MCF 10A (cell line): ENCODE measurements at regions of chrX and their contacts with region 1.

Region 1: GRCh38 chrX:151825927-151826481 is 86.7 kb upstream of the MAGEA4 start:
- DNase-seq: peak; percentile 92
- H3K4me3 Mint-ChIP-seq: no peak overlapping the region
- H3K27ac Mint-ChIP-seq: peak overlapping the region; percentile 33
- H3K4me1 Mint-ChIP-seq: peaks cover 21% of the 10 kb centered on the region
- H3K27me3 Mint-ChIP-seq: no peaks in the 10 kb centered on the region
- CTCF ChIP-seq: peak; percentile 32

Region 2: DNA sequence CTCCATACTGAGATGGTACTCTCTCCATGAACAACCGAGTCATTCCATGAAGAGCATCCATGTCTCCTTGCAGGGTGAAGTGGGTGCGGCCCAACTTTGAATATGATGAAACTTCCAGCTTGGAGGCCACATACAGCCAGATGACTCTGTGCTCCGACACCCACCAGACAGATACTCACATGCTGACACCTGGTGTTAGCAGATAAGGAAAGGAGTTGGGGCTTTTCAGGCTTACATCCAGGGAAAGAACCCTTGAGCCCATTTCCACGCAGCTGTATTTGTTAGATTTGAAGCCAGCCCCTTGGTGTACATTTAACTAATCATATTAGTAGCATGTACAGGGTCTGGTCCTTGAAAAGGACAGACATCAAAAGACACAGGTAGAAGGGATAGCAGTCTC is 192.8 kb before region 1 on chrX:
- CTCF ChIA-PET with region 1: no interaction called
- POLR2A ChIA-PET with region 1: no interaction called
- intact Hi-C with region 1: no loop called
- DNase-seq: peak; percentile 5
- H3K4me3 Mint-ChIP-seq: no peak overlapping the region
- H3K27ac Mint-ChIP-seq: no peak overlapping the region
- H3K4me1 Mint-ChIP-seq: no peaks in the 10 kb centered on the region
- H3K27me3 Mint-ChIP-seq: no peaks in the 10 kb centered on the region
- CTCF ChIP-seq: no peak

Region 3: DNA sequence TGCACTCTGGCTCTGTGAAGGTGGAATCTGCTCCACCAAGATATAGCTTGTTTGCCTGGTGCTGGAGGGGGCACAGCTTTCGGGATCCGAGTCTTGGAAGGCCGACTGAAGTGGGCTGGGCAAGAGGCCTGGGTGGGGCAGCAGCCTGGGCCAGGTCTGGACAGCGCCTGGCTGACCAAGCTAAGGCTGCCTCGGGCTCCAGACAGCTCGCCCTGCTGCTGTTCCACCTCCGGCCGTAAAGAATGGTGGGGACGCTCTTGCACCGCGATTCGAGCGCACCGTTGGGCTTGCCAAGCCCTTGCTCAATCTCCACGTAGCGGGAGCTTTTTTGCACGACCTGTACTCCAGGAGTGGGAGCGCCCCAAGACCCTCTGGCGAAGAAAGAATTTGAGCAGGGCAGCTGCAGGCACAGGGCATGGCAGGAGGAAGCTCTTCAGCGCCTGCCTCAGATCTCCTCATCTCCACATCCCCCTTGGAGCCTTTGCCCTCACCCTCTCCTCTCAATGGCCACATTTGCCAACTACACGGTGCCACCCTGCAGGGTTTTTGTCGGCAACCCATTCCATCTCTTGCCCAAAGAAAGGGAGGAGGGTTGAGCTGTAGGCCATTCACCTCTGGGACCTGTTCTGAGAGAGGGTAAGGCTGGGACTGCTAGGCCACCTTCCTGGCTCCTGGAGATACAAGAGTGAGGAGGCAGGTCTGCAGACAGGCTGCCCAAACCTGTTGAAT is 72.5 kb before region 1 on chrX:
- CTCF ChIA-PET with region 1: interaction called, 28 read pairs
- POLR2A ChIA-PET with region 1: interaction called, 7 read pairs
- intact Hi-C with region 1: loop called (anchors 2 kb)
- DNase-seq: peak; percentile 73
- H3K4me3 Mint-ChIP-seq: peak overlapping the region; percentile 36
- H3K27ac Mint-ChIP-seq: peak overlapping the region; percentile 11
- H3K4me1 Mint-ChIP-seq: peaks cover 12% of the 10 kb centered on the region
- H3K27me3 Mint-ChIP-seq: no peaks in the 10 kb centered on the region
- CTCF ChIP-seq: peak; percentile 78

Region 4: DNA sequence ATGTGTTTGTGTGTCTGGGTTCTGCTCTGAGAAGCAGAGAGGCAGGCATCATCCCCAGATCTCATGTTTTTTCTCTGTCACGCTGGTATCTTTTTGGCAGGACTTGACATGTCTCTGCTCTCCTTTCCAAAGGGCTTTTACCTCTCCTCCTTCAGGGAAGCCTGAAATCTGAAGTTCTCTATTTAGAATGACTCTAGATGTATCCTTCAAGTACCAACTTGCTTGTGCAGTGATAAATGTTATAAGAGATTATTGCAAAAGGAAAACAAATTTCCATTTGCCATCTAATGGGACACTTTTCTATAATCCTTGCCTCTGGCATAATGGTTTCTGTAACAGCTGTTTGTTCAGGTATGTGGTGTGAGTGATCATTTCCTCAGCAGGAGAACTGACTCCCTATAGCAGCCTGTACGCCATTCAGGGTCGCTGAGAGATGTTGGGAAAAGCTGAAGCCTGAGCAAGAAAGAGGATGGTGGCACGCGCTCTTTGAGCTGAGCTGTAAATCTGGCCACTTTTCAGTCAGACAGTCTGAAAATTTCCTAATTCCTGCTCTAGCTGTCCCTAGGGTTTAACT is 18.9 kb before region 1 on chrX:
- CTCF ChIA-PET with region 1: interaction called, 10 read pairs
- POLR2A ChIA-PET with region 1: interaction called, 4 read pairs
- intact Hi-C with region 1: no loop called
- DNase-seq: no peak
- H3K4me3 Mint-ChIP-seq: no peak overlapping the region
- H3K27ac Mint-ChIP-seq: peak overlapping the region; percentile 37
- H3K4me1 Mint-ChIP-seq: peaks cover 5% of the 10 kb centered on the region
- H3K27me3 Mint-ChIP-seq: no peaks in the 10 kb centered on the region
- CTCF ChIP-seq: no peak

Region 5: DNA sequence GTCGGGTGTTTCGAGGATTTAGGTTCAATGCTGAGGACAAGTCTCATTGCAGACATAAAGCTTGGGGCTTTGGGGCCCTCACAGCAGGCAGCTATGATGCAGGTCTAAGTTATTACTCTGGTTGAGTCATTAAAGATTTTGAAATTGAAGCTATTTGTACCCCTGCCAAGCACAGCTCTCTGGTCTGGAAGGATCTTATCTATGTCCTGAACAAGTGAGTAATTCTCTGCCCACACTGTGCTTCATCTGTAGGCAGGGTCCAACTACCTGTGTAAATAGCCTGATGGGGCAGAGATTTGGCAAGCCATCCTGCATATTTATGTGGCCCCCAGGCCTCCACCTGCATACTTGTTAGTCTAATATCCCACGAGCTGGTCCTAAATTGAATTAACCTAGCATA is 45.2 kb after region 1 on chrX:
- CTCF ChIA-PET with region 1: interaction called, 7 read pairs
- POLR2A ChIA-PET with region 1: interaction called, 11 read pairs
- intact Hi-C with region 1: no loop called
- DNase-seq: peak; percentile 94
- H3K4me3 Mint-ChIP-seq: peak overlapping the region; percentile 30
- H3K27ac Mint-ChIP-seq: no peak overlapping the region
- H3K4me1 Mint-ChIP-seq: peaks cover 19% of the 10 kb centered on the region
- H3K27me3 Mint-ChIP-seq: no peaks in the 10 kb centered on the region
- CTCF ChIP-seq: no peak

Region 6: DNA sequence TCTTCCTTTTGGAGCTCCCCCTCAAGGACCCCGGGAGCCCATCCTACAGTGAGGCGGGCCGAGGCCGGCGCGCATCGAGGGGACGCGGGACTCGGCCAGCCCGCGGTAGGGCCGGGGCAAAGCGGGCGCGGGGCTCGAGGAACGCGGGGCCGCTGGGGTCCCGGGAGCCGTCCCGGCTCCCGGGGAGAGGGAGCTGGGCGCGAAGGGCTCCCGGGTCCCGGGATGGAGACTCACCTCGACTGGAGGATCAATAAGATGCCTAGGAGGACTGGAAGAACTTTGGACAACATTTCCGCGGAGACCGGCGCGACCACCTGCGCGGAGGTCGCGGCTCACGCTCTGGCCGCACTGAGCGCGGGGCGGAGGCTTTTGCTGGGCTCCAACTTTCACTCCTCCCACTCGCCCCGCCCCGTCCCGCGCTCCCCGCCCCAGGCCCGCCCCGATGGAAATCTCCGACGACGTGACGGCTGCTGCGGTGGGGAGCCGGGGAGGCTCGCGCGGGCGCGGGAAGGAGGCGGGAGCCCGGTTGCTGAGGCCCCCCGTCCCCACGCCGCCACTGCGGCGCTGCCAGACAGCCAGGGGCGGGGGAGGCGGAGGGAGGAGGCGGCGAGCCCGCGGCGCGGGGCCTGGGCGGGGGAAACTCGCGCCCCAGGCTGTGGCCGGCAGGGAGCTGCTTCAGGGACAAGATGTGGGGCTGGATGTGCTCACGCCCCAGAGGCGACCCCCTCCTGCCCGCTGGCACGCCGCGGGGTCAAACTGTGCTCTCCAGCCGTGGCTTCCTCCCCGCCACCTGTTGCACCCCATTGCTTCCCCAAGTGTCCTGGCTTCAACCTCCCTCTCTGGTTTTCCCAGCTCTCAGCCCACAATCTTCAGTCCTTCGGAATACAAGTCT is 148.6 kb after region 1 on chrX and contains the start of gene GABRE:
- CTCF ChIA-PET with region 1: interaction called, 10 read pairs
- POLR2A ChIA-PET with region 1: interaction called, 5 read pairs
- intact Hi-C with region 1: loop called (anchors 2 kb)
- DNase-seq: peak; percentile 44
- H3K4me3 Mint-ChIP-seq: peak within 1 kb of the TSS; percentile 79
- H3K27ac Mint-ChIP-seq: peak within 1 kb of the TSS; percentile 73
- H3K4me1 Mint-ChIP-seq: peaks cover 35% of the 10 kb centered on the region
- H3K27me3 Mint-ChIP-seq: no peaks in the 10 kb centered on the region
- CTCF ChIP-seq: no peak
- total RNA-seq, gene GABRE: 12.9 and 19.3 TPM in 2 replicates

Region 7: GRCh38 chrX:152072236-152072635 is 246.2 kb after region 1 on chrX:
- CTCF ChIA-PET with region 1: interaction called, 5 read pairs
- POLR2A ChIA-PET with region 1: interaction called, 4 read pairs
- intact Hi-C with region 1: loop called (anchors 5 kb)
- DNase-seq: peak; percentile 94
- H3K4me3 Mint-ChIP-seq: peak overlapping the region; percentile 1
- H3K27ac Mint-ChIP-seq: no peak overlapping the region
- H3K4me1 Mint-ChIP-seq: peaks cover 6% of the 10 kb centered on the region
- H3K27me3 Mint-ChIP-seq: no peaks in the 10 kb centered on the region
- CTCF ChIP-seq: no peak

Region 8: DNA sequence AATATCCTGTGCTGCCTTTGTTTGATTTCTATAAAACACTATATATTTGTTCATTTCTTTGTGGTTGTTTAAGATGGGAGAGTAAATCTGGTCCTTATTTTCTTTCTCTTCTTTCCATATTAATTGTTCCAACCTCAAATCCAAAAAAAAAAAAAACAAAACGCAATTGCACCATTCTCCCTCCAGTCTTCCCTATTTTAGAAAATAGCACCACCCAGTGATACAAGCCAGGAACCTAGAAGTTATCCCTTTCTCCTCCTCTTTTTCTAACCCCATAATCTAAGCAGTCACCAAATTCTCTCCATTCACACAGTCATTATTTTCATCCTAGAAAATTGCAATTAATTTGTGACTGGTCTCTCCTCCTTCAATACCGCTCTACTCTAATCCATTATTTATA is 517.3 kb after region 1 on chrX:
- CTCF ChIA-PET with region 1: interaction called, 9 read pairs
- POLR2A ChIA-PET with region 1: interaction called, 3 read pairs
- intact Hi-C with region 1: loop called (anchors 1 kb)
- DNase-seq: peak; percentile 16
- H3K4me3 Mint-ChIP-seq: no peak overlapping the region
- H3K27ac Mint-ChIP-seq: no peak overlapping the region
- H3K4me1 Mint-ChIP-seq: peaks cover 7% of the 10 kb centered on the region
- H3K27me3 Mint-ChIP-seq: no peaks in the 10 kb centered on the region
- CTCF ChIP-seq: peak; percentile 19